Activated T-helper 1 cell treated with anti-CD3 and anti-CD28 coated beads, Interleukin-12 subunit alpha, Interleukin-12 subunit beta, Interleukin-2, Interleukin-4 antibody, amounts not matched to agents 30 ng/mL and 10 ng/mL and 1 ng/mL, durations not matched to agents 14 hours and 24 hours and 36 hours (primary cell): ENCODE measurements at regions of chr17 and their contacts with region 1.

Region 1: DNA sequence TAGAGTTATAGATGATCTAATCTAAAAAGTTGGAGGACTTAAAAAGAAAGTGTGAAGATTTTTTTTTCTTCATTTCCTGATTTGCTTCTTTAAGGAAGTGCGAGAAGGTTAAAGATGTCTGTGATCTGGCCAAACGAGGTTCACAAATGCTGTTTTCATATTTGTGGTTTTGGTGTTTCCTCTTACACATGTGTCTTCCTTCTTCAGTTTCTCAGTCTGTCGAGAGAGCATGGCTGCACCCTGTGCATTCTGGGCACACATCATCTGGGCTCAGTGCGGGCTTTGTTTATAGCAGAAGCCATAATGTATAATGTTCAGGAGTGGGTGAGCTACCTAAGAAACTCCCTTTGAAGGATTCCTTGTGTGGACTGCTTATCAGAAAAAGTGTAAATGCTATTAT is 260.4 kb upstream of the TBX2 start:
- DNase-seq: peak; percentile 52
- H3K4me3 Mint-ChIP-seq: peak overlapping the region; percentile 21
- H3K27ac Mint-ChIP-seq: peak overlapping the region; percentile 20
- H3K4me1 Mint-ChIP-seq: peaks cover 15% of the 10 kb centered on the region
- H3K27me3 Mint-ChIP-seq: no peaks in the 10 kb centered on the region

Region 2: GRCh38 chr17:61057257-61057656 is 82.0 kb before region 1 on chr17:
- intact Hi-C with region 1: loop called (anchors 2 kb)
- DNase-seq: no peak
- H3K4me3 Mint-ChIP-seq: no peak overlapping the region
- H3K27ac Mint-ChIP-seq: no peak overlapping the region
- H3K4me1 Mint-ChIP-seq: peaks cover 24% of the 10 kb centered on the region
- H3K27me3 Mint-ChIP-seq: no peaks in the 10 kb centered on the region